ENCODE measurements at regions of chr13 and their contacts with region 1.

Region 1: DNA sequence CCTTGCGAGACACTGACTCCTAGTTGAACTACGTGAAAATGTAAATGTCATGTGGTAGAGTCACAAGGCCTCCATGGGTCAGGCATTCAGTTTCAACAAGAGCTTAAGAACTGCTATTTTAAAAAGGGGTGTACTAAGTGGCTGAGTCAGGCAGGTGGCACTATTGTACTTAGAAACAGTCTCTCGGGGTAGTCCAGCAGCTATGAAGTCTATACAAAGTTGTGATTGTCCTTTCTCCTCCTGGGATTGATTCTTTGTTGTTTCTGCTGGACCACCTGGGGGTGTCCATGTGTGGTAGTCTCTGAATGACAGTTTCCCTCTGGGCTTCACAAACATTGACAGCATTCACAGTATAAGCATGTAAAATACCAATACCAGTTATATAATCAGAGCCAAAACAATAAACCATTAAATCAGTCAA is 33.0 kb downstream of the UGGT2 start:
- H3K4me3 Mint-ChIP-seq: no peak overlapping the region
- H3K27ac Mint-ChIP-seq: no peak overlapping the region
- H3K4me1 Mint-ChIP-seq: no peaks in the 10 kb centered on the region
- H3K27me3 Mint-ChIP-seq: no peaks in the 10 kb centered on the region

Region 2: DNA sequence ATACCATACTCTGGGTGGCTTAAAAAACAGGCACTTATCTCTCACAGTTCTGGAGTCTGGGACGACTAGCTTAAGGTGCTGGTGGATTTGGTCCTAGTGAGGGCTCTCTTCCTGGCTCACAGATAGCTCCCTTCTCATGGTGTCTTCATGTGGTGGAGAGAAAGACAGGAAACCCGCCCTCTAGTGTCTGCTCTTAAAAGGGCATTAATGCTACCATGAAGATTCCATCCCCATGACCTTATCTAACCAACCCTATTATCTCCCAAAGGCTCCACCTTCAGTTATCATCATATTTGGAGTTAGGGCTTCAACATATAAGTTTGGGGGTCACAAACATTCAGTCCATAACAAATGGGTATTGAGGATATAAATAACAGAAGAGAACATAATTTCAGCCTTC is 209.2 kb after region 1 on chr13:
- intact Hi-C with region 1: loop called (anchors 1 kb)
- H3K4me3 Mint-ChIP-seq: no peak overlapping the region
- H3K27ac Mint-ChIP-seq: no peak overlapping the region
- H3K4me1 Mint-ChIP-seq: no peaks in the 10 kb centered on the region
- H3K27me3 Mint-ChIP-seq: no peaks in the 10 kb centered on the region

Region 3: GRCh38 chr13:96817336-96817941 is 797.3 kb after region 1 on chr13:
- intact Hi-C with region 1: loop called (anchors 10 kb)
- H3K4me3 Mint-ChIP-seq: no peak overlapping the region
- H3K27ac Mint-ChIP-seq: no peak overlapping the region
- H3K4me1 Mint-ChIP-seq: no peaks in the 10 kb centered on the region
- H3K27me3 Mint-ChIP-seq: no peaks in the 10 kb centered on the region

Region 4: GRCh38 chr13:96958286-96958891 is 938.2 kb after region 1 on chr13:
- intact Hi-C with region 1: loop called (anchors 5 kb)
- H3K4me3 Mint-ChIP-seq: no peak overlapping the region
- H3K27ac Mint-ChIP-seq: no peak overlapping the region
- H3K4me1 Mint-ChIP-seq: no peaks in the 10 kb centered on the region
- H3K27me3 Mint-ChIP-seq: peaks cover 3% of the 10 kb centered on the region

Region 5: GRCh38 chr13:97030705-97031452 is 1010.7 kb after region 1 on chr13:
- intact Hi-C with region 1: loop called (anchors 10 kb)
- H3K4me3 Mint-ChIP-seq: no peak overlapping the region
- H3K27ac Mint-ChIP-seq: no peak overlapping the region
- H3K4me1 Mint-ChIP-seq: peaks cover 9% of the 10 kb centered on the region
- H3K27me3 Mint-ChIP-seq: peaks cover 11% of the 10 kb centered on the region

Measured in dendritic cell treated with granulocyte-macrophage colony-stimulating factor and Interleukin-4, amounts not matched to agents 40 ng/mL and 50 ng/mL, for 4 days (primary cell).